GM10248 (cell line): ENCODE measurements at regions of chr11 and their contacts with region 1.

Region 1: GRCh38 chr11:43504316-43504950 is 145.7 kb downstream of the TTC17 start:
- DNase-seq: peak; percentile 51
- CTCF ChIP-seq: peak; percentile 48

Region 2: DNA sequence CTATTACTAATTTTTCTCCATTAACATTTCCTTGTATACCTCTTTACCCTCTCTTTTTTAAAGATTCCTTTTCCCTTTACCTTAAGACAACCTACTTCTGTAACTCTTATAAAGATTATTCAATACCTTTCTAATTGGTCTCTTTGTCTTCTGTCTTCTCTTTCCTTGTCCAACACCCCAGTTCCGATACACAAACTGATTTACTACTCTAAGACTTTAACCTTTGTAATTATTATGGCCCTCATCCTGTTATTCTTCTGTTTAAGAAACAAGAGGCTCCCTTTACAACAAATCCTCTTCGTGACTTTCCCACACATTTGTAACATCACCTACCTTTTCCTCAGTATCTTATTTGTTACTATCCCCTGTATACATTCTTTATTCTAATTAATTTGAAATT is 63.9 kb before region 1 on chr11:
- CTCF ChIA-PET with region 1: no interaction called
- POLR2A ChIA-PET with region 1: no interaction called
- DNase-seq: no peak
- CTCF ChIP-seq: no peak

Region 3: GRCh38 chr11:43515090-43515489 is 10.7 kb after region 1 on chr11:
- CTCF ChIA-PET with region 1: interaction called, 18 read pairs
- POLR2A ChIA-PET with region 1: no interaction called
- DNase-seq: no peak
- CTCF ChIP-seq: peak; percentile 11

Region 4: DNA sequence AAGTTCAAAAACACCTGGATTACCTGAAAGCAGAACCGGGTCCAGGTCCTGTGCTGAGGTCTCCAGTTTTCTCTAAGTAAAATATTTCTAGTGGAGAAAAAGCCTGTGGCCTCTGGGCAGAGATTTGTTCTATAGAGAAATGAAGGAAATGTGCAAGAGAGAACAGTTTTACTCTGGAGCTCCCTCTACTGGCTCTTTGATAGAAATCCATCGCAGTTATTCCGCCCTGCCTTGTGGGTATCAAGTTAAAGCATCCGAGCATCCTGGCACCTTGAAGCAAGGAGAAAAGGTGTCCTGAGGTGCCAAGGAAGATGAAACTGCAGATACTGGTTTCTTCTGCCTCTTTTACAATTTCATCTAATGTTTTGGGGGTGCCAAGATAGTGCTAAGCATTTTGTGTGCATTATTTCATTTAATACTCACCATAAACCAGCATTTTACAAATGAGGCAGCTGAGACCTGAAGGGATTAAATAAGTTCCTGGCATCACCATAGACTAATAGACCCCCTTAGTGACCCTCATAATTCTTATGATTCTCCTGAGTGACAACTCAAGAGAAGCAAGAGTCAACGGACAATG is 63.1 kb after region 1 on chr11:
- CTCF ChIA-PET with region 1: interaction called, 38 read pairs
- POLR2A ChIA-PET with region 1: interaction called, 3 read pairs
- DNase-seq: peak; percentile 67
- CTCF ChIP-seq: peak; percentile 67

Region 5: DNA sequence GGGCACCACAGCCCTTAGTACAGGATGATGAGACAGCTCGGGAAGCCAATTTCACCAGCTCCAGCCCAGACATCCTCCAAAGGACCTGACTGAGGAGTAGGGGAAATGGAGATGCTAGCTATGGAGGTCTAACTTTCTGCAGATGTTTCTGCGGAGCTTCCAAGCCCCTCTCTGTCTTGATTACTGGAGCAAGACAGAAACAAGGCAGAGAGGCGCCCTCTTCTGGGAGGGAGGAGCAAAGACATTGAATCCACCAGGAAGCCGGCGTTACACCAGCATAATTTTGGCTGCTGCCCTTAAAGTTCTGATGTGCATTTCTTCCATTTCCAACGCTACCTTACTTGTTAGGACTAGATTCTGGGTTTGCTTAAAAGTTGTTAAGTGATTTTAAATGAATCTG is 68.8 kb after region 1 on chr11:
- CTCF ChIA-PET with region 1: interaction called, 38 read pairs
- POLR2A ChIA-PET with region 1: interaction called, 3 read pairs
- DNase-seq: peak; percentile 39
- CTCF ChIP-seq: peak; percentile 66